Activated CD4-positive, alpha-beta T cell treated with anti-CD3 and anti-CD28 coated beads for 36 hours (primary cell): ENCODE measurements at regions of chr5 and their contacts with region 1.

Region 1: DNA sequence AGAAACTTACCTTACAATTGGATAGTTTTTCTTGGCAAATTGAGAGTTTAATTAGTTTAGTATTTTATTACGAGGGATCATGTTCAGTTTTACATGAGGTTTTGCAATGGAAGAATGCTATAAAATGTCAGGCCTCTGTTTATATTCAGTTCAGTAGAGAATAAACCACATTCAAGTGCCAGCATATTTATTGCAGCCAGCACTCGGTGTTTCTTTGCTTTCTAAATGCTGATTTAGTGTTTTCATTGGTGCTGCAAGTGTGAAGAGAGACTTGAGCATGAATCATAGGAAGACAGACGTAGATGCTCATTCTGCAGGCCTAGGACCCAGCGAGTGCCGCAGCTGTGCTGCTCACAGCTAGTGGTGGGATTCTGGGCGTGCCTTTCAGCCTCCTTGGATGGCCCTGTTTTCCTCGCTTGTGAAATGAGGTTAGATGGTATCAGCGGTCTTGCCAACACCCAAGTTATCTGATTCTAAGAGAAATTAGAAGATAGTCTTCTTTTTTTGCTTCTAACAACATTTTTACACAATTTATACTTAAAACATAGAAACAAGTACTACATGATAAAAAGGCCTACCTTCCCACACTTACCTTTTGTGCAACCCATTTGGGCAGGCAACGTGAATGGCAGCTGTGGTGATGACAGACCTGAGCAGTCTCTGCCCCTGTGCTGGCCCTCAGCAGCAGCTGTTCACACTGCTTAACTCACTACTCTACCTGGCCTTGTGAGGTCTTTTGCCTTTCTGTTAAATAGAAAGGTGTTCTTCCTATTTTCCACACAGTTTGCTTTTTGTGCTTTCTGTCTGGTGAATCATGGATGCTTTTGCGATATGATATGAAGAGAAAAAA is 26.8 kb upstream of the TNFAIP8 start:
- DNase-seq: peak; percentile 80
- ATAC-seq: peak; percentile 58
- H3K4me3 Mint-ChIP-seq: peak overlapping the region; percentile 45
- H3K27ac Mint-ChIP-seq: peak overlapping the region; percentile 98
- H3K4me1 Mint-ChIP-seq: peaks cover 96% of the 10 kb centered on the region
- H3K27me3 Mint-ChIP-seq: no peaks in the 10 kb centered on the region

Region 2: DNA sequence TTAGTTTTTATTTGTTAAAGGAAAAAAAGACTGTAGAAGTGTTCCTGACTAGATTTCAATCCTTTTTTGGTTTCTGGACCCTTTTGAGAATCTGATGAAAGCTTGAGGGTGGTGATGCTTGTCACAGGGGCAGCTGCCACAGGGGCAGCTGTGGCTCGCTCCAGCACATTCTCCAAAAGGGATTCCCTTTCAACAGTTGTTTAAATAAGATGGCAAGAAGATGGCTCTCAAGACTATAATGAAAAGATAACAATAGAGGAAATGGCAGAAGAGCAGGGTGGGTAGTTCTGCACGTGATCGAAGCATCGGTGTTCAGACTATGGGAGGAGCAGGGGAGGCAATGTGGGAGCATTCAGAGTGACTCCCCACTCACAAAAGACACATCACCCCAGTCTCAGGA is 19.7 kb before region 1 on chr5:
- CTCF ChIA-PET with region 1: interaction called, 3 read pairs
- POLR2A ChIA-PET with region 1: interaction called, 3 read pairs
- intact Hi-C with region 1: loop called in 1 of 2 experiments (anchors 1 kb)
- DNase-seq: no peak
- ATAC-seq: no peak
- H3K4me3 Mint-ChIP-seq: peak overlapping the region; percentile 53
- H3K27ac Mint-ChIP-seq: peak overlapping the region; percentile 91
- H3K4me1 Mint-ChIP-seq: peaks cover 91% of the 10 kb centered on the region
- H3K27me3 Mint-ChIP-seq: no peaks in the 10 kb centered on the region

Region 3: DNA sequence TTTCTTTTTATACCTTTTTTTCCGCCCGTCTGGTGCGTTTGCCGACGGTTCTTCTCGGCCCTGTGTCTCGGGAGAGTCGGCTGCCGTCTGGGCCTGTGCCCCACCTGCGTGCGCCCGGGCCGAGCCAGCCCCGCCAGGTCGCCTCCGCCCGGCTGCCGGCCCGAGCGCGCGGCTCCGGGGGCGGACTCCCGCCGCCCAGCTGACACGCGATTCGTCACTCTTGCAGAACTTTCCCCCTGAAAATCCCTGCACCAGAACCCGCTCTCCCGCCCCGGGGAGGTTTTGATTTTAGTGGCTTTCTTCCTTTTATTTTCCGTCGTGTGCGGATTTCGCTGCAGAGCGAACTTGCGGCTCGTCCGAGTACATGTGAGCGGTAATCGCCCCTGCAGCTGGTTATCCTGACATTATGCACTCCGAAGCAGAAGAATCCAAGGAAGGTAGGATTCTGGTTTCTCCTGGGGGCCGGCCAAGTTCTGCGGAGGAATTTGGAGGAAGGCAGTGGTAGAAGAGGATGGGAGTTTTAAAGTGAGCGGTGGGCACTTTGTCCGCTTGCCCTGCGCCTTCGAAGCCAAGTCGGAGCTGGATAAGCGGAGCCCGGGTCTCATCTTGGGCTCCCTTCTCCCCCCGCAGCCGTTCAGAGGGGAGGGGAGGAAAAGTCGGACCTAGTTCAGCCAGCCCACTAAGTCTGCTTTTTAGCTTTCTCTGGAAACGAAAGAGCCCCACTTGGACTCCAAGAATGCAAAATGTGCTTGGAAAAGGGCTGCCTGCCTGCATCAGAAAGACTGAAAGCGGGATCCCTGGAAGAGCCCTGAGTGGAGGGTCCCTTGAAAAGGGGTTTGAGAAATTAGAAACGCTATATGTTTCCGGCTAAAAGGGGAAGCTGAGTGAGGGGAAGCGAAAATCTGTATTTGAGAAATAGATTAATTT is 27.0 kb after region 1 on chr5 and contains the start of gene TNFAIP8:
- CTCF ChIA-PET with region 1: interaction called, 8 read pairs
- POLR2A ChIA-PET with region 1: interaction called, 21 read pairs
- intact Hi-C with region 1: no loop called
- DNase-seq: peak; percentile 91
- ATAC-seq: peak; percentile 65
- H3K4me3 Mint-ChIP-seq: peak within 1 kb of the TSS; percentile 98
- H3K27ac Mint-ChIP-seq: peak within 1 kb of the TSS; percentile 99
- H3K4me1 Mint-ChIP-seq: peaks cover 62% of the 10 kb centered on the region
- H3K27me3 Mint-ChIP-seq: no peaks in the 10 kb centered on the region
- total RNA-seq, gene TNFAIP8: 166 to 171 TPM